CD4-positive, alpha-beta T cell (primary cell): ENCODE measurements at regions of chr9 and their contacts with region 1.

Region 1: GRCh38 chr9:107274953-107275422 is 8.1 kb upstream of the RAD23B start:
- DNase-seq: no peak
- ATAC-seq: no peak
- H3K4me3 ChIP-seq: no peak overlapping the region
- H3K4me3 Mint-ChIP-seq: no peak overlapping the region
- H3K27ac ChIP-seq: no peak overlapping the region
- H3K27ac Mint-ChIP-seq: no peak overlapping the region
- H3K4me1 ChIP-seq: no peaks in the 10 kb centered on the region
- H3K4me1 Mint-ChIP-seq: no peaks in the 10 kb centered on the region
- H3K27me3 ChIP-seq: peaks cover 2 to 9% of the 10 kb centered on the region in 2 experiments
- H3K27me3 Mint-ChIP-seq: peaks cover 38% of the 10 kb centered on the region
- CTCF ChIP-seq: no peak

Region 2: GRCh38 chr9:107309271-107309670 is 34.3 kb after region 1 on chr9:
- CTCF ChIA-PET with region 1: no interaction called
- POLR2A ChIA-PET with region 1: no interaction called
- intact Hi-C with region 1: loop called in 1 of 2 experiments (anchors 5 kb)
- DNase-seq: peak in 3 of 14 experiments; percentile 43 to 50 (median 48)
- ATAC-seq: peak; percentile 61
- H3K4me3 ChIP-seq: no peak overlapping the region
- H3K4me3 Mint-ChIP-seq: no peak overlapping the region
- H3K27ac ChIP-seq: no peak overlapping the region
- H3K27ac Mint-ChIP-seq: peak overlapping the region; percentile 31
- H3K4me1 ChIP-seq: peaks cover 11% of the 10 kb centered on the region
- H3K4me1 Mint-ChIP-seq: peaks cover 83% of the 10 kb centered on the region
- H3K27me3 ChIP-seq: no peaks in the 10 kb centered on the region
- H3K27me3 Mint-ChIP-seq: no peaks in the 10 kb centered on the region
- CTCF ChIP-seq: no peak